Left lung (tissue), 14 donors: ENCODE measurements at regions of chr19 and their contacts with region 1.

Region 1: DNA sequence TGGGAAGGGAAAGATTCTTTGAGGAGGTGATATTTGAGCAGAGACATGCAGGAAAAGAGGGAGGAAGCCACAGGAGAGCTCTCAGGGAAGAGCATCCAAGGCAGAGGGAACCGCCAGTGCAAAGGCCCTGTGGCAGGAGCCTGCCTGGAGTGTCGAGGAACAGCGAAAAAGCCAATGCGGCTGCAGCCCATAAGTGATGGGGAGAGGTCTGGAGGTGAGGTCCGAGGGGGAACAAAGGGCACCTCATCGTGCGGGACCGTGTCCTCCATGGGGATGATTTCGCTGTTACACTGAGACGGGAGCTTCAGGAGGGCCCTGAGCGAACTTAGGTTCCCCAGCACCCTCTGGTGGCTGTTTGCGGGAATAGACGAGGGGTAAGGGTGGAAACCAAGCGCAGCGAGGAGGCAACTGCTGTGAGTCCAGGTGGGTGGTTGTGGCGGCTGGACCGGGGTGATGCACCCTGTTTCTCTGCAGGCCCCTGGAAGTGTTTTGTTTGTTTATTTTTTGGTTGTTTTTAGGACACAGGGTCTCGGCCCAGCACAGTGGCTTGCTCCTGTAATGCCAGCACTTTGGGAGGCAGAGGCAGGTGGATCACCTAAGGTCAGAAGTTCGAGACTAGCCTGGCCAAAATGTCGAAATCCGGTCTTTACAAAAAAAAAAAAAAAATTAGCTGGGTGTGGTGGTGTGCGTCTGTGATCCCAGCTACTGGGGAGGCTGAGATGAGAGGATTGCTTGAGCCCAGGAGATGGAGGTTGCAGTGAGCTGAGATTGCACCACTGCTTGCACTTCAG is 5.9 kb upstream of the EHD2 start:
- DNase-seq: peak in 3 of 4 donors; percentile 63 to 84 (median 74)
- ATAC-seq: peak; percentile 96
- H3K4me3 ChIP-seq: no peak overlapping the region
- H3K27ac ChIP-seq: no peak overlapping the region
- H3K4me1 ChIP-seq: no peaks in the 10 kb centered on the region
- H3K27me3 ChIP-seq: peaks cover 0 to 2% of the 10 kb centered on the region in 2 donors
- CTCF ChIP-seq: peak; percentile 72 to 82

Region 2: DNA sequence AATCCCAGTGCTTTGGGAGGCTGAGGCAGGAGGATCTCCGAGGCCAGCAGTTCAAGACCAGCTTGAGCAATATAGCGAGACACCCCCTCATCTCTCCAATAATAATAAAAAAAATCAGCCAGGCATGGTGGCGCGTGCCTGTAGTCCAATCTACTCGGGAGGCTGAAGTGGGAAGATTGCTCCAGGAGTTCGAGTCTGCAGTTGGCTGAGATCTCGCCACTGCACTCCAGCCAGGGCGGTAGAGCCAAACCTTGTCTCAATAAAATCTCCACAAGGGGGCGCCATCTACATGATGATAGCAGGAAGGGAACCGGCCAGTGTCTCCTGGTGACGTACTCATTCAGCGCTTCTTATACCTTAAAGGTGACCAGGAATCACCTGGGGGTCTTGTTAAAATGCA is 411.3 kb before region 1 on chr19:
- intact Hi-C with region 1: loop called in 1 of 2 experiments (anchors 10 kb)
- DNase-seq: peak in 2 of 4 donors; percentile 69 to 73
- ATAC-seq: peak; percentile 97
- H3K4me3 ChIP-seq: no peak overlapping the region
- H3K27ac ChIP-seq: no peak overlapping the region
- H3K4me1 ChIP-seq: peaks cover 0 to 4% of the 10 kb centered on the region in 2 donors
- H3K27me3 ChIP-seq: no peaks in the 10 kb centered on the region
- CTCF ChIP-seq: peak; percentile 75 to 86

Region 3: GRCh38 chr19:47436712-47437401 is 270.5 kb before region 1 on chr19:
- intact Hi-C with region 1: loop called (anchors 5 to 10 kb)
- DNase-seq: peak in 3 of 4 donors; percentile 72 to 92 (median 75)
- ATAC-seq: peak; percentile 99
- H3K4me3 ChIP-seq: no peak overlapping the region
- H3K27ac ChIP-seq: no peak overlapping the region
- H3K4me1 ChIP-seq: peaks cover 0 to 3% of the 10 kb centered on the region in 2 donors
- H3K27me3 ChIP-seq: peaks cover under 1 to 89% of the 10 kb centered on the region in 2 donors
- CTCF ChIP-seq: peak; percentile 83 to 89

Region 4: DNA sequence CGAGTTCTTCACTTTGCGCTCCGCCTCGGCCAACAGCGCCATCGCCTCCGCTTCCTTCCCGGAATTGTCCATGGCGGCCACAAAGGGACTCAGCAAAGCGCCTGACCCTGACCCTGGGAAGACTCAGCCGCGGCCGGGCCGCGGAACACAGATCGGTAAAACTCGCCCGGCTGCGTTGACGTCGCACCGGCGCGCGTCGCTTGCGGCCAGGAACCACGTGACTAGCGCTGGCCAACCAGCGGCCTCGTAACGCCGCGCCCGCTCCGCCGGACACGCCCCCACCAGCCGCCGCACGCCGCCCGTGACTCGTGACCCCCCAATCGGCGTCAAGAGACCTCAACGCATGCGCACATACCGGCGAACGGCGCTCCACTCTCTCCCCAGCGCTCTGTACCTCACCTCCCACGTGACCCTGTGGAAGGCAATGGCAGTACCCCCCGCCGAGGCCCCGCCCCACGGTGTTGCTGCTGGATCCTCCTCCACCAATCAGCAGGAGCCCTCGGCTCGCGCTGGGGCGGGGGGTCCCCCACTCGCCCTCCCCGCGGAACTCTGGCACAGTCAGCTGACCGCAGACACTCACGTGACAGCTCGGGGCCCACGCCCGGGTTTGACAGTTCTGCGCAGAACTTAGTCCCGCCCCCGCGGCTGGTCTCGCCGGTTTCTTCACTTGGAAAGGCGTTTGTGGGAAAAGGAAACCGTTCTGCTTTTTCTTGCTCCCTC is 192.3 kb before region 1 on chr19 and contains the start of gene NAPA:
- intact Hi-C with region 1: loop called in 1 of 2 experiments (anchors 10 kb)
- DNase-seq: peak; percentile 100
- ATAC-seq: peak; percentile 96
- H3K4me3 ChIP-seq: peak within 1 kb of the TSS; percentile 91 to 98
- H3K27ac ChIP-seq: peak within 1 kb of the TSS; percentile 93 to 96
- H3K4me1 ChIP-seq: peaks cover 30 to 52% of the 10 kb centered on the region in 2 donors
- H3K27me3 ChIP-seq: no peaks in the 10 kb centered on the region
- CTCF ChIP-seq: no peak
- polyA plus RNA-seq, gene NAPA: 117 to 131 (median 120) TPM